ENCODE measurements at regions of chr19 and their contacts with region 1.

Region 1: DNA sequence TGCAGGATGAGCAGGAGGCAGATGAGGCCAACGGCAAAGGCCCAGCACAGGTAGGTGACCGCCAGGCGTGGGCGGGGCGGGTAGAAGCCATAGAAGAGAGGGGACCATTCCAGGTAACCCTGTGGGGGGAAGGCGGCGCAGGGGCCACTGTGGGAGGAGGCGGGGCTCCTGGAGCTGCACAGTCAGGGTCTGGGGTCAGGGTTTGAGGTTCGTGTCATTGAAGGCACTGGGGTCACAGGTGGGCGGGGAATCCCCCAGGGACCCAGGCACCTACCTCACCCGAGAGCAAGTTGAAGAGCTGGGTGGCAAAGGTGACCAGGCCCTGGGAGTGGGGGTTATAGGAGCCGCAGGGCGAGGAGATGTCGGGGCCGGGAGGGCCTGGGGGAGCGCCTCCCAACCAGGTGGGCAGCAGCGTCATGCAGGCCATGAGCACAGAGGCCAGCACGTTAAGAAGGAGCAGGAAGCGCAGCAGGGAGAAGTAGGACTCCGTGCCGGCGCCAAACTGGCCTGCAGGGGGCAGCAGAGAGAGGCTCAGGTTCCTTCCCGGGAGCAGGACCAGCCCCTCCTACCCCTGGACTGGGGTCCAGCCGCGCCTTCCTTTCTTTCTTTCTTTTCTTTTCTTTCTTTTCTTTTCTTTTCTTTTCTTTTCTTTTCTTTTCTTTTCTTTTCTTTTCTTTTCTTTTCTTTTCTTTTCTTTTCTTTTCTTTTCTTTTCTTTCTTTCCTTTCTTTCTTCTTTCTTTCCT is 4.6 kb downstream of the TMC4 start:
- DNase-seq: peak; percentile 81
- H3K4me3 Mint-ChIP-seq: no peak overlapping the region
- H3K27ac Mint-ChIP-seq: no peak overlapping the region
- H3K4me1 Mint-ChIP-seq: peaks cover 9% of the 10 kb centered on the region
- H3K27me3 Mint-ChIP-seq: no peaks in the 10 kb centered on the region

Region 2: GRCh38 chr19:54102421-54103169 is 65.8 kb before region 1 on chr19 and contains the start of gene NDUFA3:
- intact Hi-C with region 1: no loop called
- DNase-seq: peak; percentile 98
- H3K4me3 Mint-ChIP-seq: peak within 1 kb of the TSS; percentile 91
- H3K27ac Mint-ChIP-seq: peak within 1 kb of the TSS; percentile 79
- H3K4me1 Mint-ChIP-seq: peaks cover 8% of the 10 kb centered on the region
- H3K27me3 Mint-ChIP-seq: peaks cover 3% of the 10 kb centered on the region
- total RNA-seq, gene NDUFA3: 105 and 115 TPM in 2 replicates

Region 3: GRCh38 chr19:54147676-54148075 is 20.7 kb before region 1 on chr19:
- intact Hi-C with region 1: loop called (anchors 1 kb)
- DNase-seq: no peak
- H3K4me3 Mint-ChIP-seq: no peak overlapping the region
- H3K27ac Mint-ChIP-seq: no peak overlapping the region
- H3K4me1 Mint-ChIP-seq: no peaks in the 10 kb centered on the region
- H3K27me3 Mint-ChIP-seq: no peaks in the 10 kb centered on the region

Region 4: DNA sequence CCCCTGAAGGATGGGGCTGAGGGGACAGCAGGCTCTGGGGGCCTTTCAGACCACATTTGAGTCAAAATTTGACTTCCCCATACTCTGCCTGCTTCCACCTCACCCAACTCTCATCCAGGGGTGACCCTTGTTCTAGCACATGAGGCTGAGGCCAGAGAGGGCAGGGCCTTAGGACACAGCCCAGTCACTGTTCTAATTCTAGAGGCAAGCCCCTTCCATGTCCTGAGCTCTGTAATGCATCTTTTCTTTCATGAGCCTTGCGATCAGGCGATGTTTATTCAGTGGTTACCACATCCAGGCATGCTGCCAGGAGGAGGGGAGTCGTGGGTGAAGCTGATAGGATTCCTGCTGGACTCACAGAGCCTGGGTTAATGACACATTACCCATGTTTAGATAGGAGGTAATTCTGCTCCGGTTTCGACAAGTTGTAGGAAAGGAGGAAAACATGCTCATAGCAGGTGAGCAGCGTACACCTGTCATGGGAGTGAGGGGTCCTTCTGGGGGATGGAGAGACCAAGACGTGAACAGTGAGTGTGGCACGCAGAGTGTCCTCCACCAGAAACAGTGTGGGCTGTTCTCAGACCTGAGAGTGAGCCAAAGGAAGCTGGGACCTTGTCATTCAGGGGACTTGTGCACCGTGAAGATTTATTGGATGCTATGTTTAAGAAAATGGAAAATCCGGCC is 41.6 kb after region 1 on chr19:
- intact Hi-C with region 1: no loop called
- DNase-seq: no peak
- H3K4me3 Mint-ChIP-seq: peak overlapping the region; percentile 30
- H3K27ac Mint-ChIP-seq: peak overlapping the region; percentile 71
- H3K4me1 Mint-ChIP-seq: peaks cover 59% of the 10 kb centered on the region
- H3K27me3 Mint-ChIP-seq: no peaks in the 10 kb centered on the region

Region 5: GRCh38 chr19:54231077-54231931 is 63.0 kb after region 1 on chr19:
- intact Hi-C with region 1: loop called (anchors 1 kb)
- DNase-seq: peak; percentile 76
- H3K4me3 Mint-ChIP-seq: no peak overlapping the region
- H3K27ac Mint-ChIP-seq: no peak overlapping the region
- H3K4me1 Mint-ChIP-seq: peaks cover 7% of the 10 kb centered on the region
- H3K27me3 Mint-ChIP-seq: peaks cover 30% of the 10 kb centered on the region

Region 6: DNA sequence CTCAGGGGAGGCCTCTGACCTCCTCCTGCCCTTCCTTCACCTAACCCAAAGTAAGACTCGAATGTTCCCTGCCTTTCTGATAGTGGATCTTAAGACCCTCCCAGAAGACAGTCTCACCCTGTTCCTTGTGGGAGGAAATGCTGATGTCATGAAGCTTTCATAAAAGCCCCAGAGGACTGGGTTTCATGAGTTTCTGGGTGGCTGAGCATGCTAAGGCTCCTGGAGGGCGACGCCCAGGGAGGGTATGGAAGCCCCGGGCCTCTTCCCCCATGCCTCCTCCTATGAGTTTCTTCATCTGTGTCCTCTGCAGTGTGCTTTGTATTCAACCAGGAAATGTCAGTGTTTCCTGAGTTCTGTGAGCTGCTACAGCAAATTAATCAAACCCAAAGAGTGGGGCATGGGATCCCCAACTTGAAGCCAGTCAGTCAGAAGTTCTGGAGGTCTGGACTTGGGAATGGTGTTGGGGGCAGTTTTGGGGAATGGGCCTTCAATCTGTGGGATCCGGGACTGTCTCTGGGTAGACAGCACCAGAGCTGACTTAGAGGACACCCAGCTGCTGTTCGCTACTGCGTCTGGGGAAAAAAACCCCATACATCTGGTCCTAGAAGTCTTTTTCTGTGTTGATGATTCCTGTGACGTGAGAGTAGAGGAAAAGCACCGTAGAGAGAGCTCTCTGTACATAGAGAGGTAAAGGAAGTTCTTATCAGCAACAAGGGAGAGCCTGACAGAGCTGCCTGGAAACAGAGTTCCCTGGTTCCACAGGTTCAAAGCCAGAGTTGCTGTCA is 114.5 kb after region 1 on chr19:
- intact Hi-C with region 1: no loop called
- DNase-seq: no peak
- H3K4me3 Mint-ChIP-seq: no peak overlapping the region
- H3K27ac Mint-ChIP-seq: no peak overlapping the region
- H3K4me1 Mint-ChIP-seq: no peaks in the 10 kb centered on the region
- H3K27me3 Mint-ChIP-seq: peaks cover 32% of the 10 kb centered on the region